CD4-positive, alpha-beta memory T cell (primary cell): ENCODE measurements at regions of chrX and their contacts with region 1.

Region 1: GRCh38 chrX:78103623-78104446 is at the start of gene PGK1:
- DNase-seq: peak; percentile 90 to 96 (median 95)
- H3K4me3 ChIP-seq: peak within 1 kb of the TSS; percentile 62 to 90
- H3K4me3 Mint-ChIP-seq: peak within 1 kb of the TSS; percentile 87 to 94 (median 92)
- H3K27ac ChIP-seq: peak within 1 kb of the TSS; percentile 86
- H3K27ac Mint-ChIP-seq: peak within 1 kb of the TSS; percentile 92 to 98 (median 95)
- H3K4me1 ChIP-seq: peaks cover 34% of the 10 kb centered on the region
- H3K4me1 Mint-ChIP-seq: peaks cover 24 to 52% (median 36%) of the 10 kb centered on the region in 4 donors
- H3K27me3 ChIP-seq: no peaks in the 10 kb centered on the region
- H3K27me3 Mint-ChIP-seq: no peaks in the 10 kb centered on the region
- total RNA-seq, gene PGK1: 205 to 209 TPM

Region 2: GRCh38 chrX:77899081-77899828 is 204.6 kb before region 1 on chrX and contains the start of gene COX7B:
- CTCF ChIA-PET with region 1: no interaction called
- POLR2A ChIA-PET with region 1: interaction called, 14 read pairs
- intact Hi-C with region 1: loop called (anchors 5 kb)
- DNase-seq: peak; percentile 82 to 91 (median 88)
- H3K4me3 ChIP-seq: peak within 1 kb of the TSS; percentile 42 to 76
- H3K4me3 Mint-ChIP-seq: peak within 1 kb of the TSS; percentile 84 to 96 (median 91)
- H3K27ac ChIP-seq: peak within 1 kb of the TSS; percentile 81
- H3K27ac Mint-ChIP-seq: peak within 1 kb of the TSS; percentile 88 to 99 (median 95)
- H3K4me1 ChIP-seq: peaks cover 25% of the 10 kb centered on the region
- H3K4me1 Mint-ChIP-seq: peaks cover 7 to 49% (median 20%) of the 10 kb centered on the region in 4 donors
- H3K27me3 ChIP-seq: no peaks in the 10 kb centered on the region
- H3K27me3 Mint-ChIP-seq: no peaks in the 10 kb centered on the region
- total RNA-seq, gene COX7B: 115 to 126 TPM

Region 3: DNA sequence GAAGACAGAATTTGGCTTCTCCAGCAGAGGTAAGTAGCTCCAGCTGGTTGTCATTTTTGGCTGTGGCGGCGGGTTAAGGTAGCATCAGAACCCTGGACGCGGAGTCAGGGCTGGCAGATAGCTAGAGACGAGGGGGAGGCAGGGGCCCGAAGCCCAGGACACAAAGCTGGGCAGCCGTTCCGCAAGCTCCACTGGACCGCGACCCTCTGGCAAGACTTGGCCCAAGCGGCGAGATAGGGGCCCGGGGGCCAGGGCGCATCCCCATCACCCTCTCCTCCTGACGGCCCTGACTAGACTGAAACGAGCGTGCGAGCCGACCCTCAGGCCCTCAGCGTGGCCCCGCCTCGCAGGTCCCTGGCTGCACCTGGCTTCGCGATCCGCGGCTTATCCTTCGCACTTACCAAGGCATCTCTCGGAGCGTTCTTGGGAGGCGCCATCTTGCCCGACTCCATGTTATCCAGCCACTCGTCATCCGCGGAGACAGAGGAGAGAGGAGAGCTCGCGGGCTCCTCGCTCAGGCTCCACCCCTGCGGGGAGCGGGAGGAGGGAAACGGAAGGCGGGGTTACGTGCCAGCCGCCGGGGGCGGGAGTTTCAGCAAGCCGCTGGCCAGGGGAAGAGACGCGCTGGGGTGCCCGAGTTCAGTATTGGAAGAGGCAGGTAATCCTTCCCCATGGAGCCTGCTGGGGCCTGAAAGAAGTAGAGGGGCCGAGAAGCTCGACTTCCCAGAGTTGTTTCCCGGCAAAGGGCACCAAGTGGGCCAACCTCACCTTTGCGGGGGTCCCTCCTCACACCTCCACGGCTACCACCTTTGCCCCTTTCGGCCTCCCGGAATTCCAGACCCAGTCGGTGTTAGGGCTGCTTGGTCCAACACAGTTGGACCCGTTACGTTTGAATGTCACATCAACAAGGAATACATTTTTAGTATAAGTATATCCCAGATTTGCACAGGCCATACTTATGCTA is 35.6 kb after region 1 on chrX and contains the start of gene TAF9B:
- CTCF ChIA-PET with region 1: no interaction called
- POLR2A ChIA-PET with region 1: interaction called, 7 read pairs
- intact Hi-C with region 1: loop called (anchors 2 kb)
- DNase-seq: peak; percentile 80 to 89 (median 83)
- H3K4me3 ChIP-seq: peak within 1 kb of the TSS; percentile 29 to 67
- H3K4me3 Mint-ChIP-seq: peak within 1 kb of the TSS; percentile 91 to 97 (median 94)
- H3K27ac ChIP-seq: peak within 1 kb of the TSS; percentile 85
- H3K27ac Mint-ChIP-seq: peak within 1 kb of the TSS; percentile 89 to 97 (median 95)
- H3K4me1 ChIP-seq: peaks cover 6% of the 10 kb centered on the region
- H3K4me1 Mint-ChIP-seq: peaks cover 3 to 7% (median 5%) of the 10 kb centered on the region in 4 donors
- H3K27me3 ChIP-seq: no peaks in the 10 kb centered on the region
- H3K27me3 Mint-ChIP-seq: no peaks in the 10 kb centered on the region
- total RNA-seq, gene TAF9B: 23.6 to 28.3 TPM

Region 4: GRCh38 chrX:78199851-78200250 is 96.0 kb after region 1 on chrX:
- CTCF ChIA-PET with region 1: no interaction called
- POLR2A ChIA-PET with region 1: no interaction called
- intact Hi-C with region 1: no loop called
- DNase-seq: peak in 4 of 5 donors; percentile 3 to 25 (median 14)
- H3K4me3 ChIP-seq: no peak overlapping the region
- H3K4me3 Mint-ChIP-seq: no peak overlapping the region
- H3K27ac ChIP-seq: no peak overlapping the region
- H3K27ac Mint-ChIP-seq: no peak overlapping the region
- H3K4me1 ChIP-seq: no peaks in the 10 kb centered on the region
- H3K4me1 Mint-ChIP-seq: peaks cover 0 to 2% (median 0%) of the 10 kb centered on the region in 4 donors
- H3K27me3 ChIP-seq: no peaks in the 10 kb centered on the region
- H3K27me3 Mint-ChIP-seq: no peaks in the 10 kb centered on the region

Region 5: GRCh38 chrX:78517124-78517523 is 413.3 kb after region 1 on chrX:
- CTCF ChIA-PET with region 1: interaction called, 3 read pairs
- POLR2A ChIA-PET with region 1: interaction called, 3 read pairs
- intact Hi-C with region 1: loop called (anchors 2 kb)
- DNase-seq: peak; percentile 81 to 90 (median 87)
- H3K4me3 ChIP-seq: no peak overlapping the region
- H3K4me3 Mint-ChIP-seq: peak overlapping the region in 7 of 8 donors; percentile 45 to 78 (median 61)
- H3K27ac ChIP-seq: peak overlapping the region; percentile 48
- H3K27ac Mint-ChIP-seq: peak overlapping the region; percentile 83 to 98 (median 95)
- H3K4me1 ChIP-seq: peaks cover 42% of the 10 kb centered on the region
- H3K4me1 Mint-ChIP-seq: peaks cover 21 to 46% (median 35%) of the 10 kb centered on the region in 4 donors
- H3K27me3 ChIP-seq: no peaks in the 10 kb centered on the region
- H3K27me3 Mint-ChIP-seq: no peaks in the 10 kb centered on the region